Adrenal gland (tissue), 19 donors: ENCODE measurements at regions of chr6 and their contacts with region 1.

Region 1: GRCh38 chr6:46221222-46221793 is 50.5 kb upstream of the ENPP5 start:
- DNase-seq: peak in 1 of 7 donors; percentile 13
- H3K4me3 ChIP-seq: no peak overlapping the region
- H3K27ac ChIP-seq: no peak overlapping the region
- H3K4me1 ChIP-seq: peaks cover 0 to 21% of the 10 kb centered on the region in 2 donors
- H3K27me3 ChIP-seq: no peaks in the 10 kb centered on the region
- CTCF ChIP-seq: peak; percentile 74 to 96 (median 94)
- POLR2A ChIP-seq: no peak

Region 2: GRCh38 chr6:45500924-45501816 is 720.1 kb before region 1 on chr6:
- intact Hi-C with region 1: no loop called
- DNase-seq: no peak
- H3K4me3 ChIP-seq: no peak overlapping the region
- H3K27ac ChIP-seq: no peak overlapping the region
- H3K4me1 ChIP-seq: no peaks in the 10 kb centered on the region
- H3K27me3 ChIP-seq: no peaks in the 10 kb centered on the region
- CTCF ChIP-seq: peak in 2 of 6 experiments; percentile 7 to 12
- POLR2A ChIP-seq: no peak

Region 3: GRCh38 chr6:46090115-46091079 is 130.9 kb before region 1 on chr6:
- intact Hi-C with region 1: loop called in 1 of 2 experiments (anchors 5 kb)
- DNase-seq: peak; percentile 45 to 83 (median 61)
- H3K4me3 ChIP-seq: no peak overlapping the region
- H3K27ac ChIP-seq: no peak overlapping the region
- H3K4me1 ChIP-seq: no peaks in the 10 kb centered on the region
- H3K27me3 ChIP-seq: no peaks in the 10 kb centered on the region
- CTCF ChIP-seq: peak; percentile 58 to 86 (median 77)
- POLR2A ChIP-seq: no peak

Region 4: DNA sequence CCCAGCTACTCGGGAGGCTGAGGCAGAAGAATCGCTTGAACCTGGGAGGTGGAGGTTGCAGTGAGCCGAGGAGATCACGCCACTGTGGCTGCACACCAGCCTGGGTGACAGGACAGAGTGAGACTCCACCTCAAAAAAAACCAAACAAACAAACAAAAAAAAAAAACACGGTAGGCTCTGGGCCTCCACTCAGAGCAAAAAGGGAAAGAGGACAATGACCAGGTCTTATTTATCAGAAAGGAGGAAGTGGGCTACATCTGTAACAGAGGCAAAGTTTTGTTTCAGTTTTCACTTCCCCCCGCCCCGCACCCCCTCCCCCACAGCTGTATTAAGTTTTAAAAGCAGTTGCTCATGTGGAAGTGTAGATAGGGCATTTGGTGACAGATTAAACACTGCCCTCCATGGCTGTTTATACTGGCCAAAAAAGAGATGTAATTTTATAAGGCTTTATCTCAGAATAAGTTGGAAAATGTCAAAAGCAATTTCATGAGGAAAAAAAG is 155.3 kb after region 1 on chr6:
- intact Hi-C with region 1: no loop called
- DNase-seq: peak in 2 of 7 donors; percentile 5 to 56
- H3K4me3 ChIP-seq: no peak overlapping the region
- H3K27ac ChIP-seq: peak overlapping the region in 2 of 5 donors; percentile 15 to 39
- H3K4me1 ChIP-seq: peaks cover 0 to 21% of the 10 kb centered on the region in 2 donors
- H3K27me3 ChIP-seq: no peaks in the 10 kb centered on the region
- CTCF ChIP-seq: no peak
- POLR2A ChIP-seq: no peak